G401 (cell line): ENCODE measurements at regions of chr3 and their contacts with region 1.

Region 1: GRCh38 chr3:55105647-55106046 is 177.8 kb upstream of the LRTM1 start:
- DNase-seq: no peak

Region 2: DNA sequence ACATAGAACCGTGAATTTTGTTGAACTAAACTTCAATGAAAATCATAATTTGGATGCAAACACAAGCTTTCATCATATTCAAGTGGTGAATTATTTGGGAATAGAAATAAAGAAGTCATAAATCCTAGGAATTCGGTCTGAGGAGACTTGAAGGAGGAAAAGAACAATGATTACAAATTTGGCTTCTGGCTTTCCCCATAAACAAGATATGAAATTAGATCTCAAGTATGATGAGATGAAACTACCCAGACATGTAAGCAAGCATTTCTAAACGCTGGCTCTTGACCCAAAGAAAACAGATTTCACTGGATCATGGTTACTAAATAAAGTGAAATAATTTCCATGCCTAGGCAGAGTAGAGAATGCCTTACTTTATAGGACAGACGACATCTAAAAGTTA is 30.9 kb before region 1 on chr3:
- in situ Hi-C with region 1: loop called (anchors 5 kb)
- DNase-seq: no peak